ENCODE measurements at regions of chr13 and their contacts with region 1.

Region 1: GRCh38 chr13:77595166-77595810 is 59.8 kb downstream of the SCEL start:
- DNase-seq: no peak
- H3K4me3 ChIP-seq: no peak overlapping the region
- H3K27ac ChIP-seq: no peak overlapping the region
- H3K4me1 ChIP-seq: no peaks in the 10 kb centered on the region; a peak in 1 of 4 replicates
- H3K27me3 ChIP-seq: no peaks in the 10 kb centered on the region
- CTCF ChIP-seq: no peak
- EP300 ChIP-seq: no peak
- RAD21 ChIP-seq: no peak

Region 2: GRCh38 chr13:77574096-77574495 is 21.2 kb before region 1 on chr13:
- CTCF ChIA-PET with region 1: interaction called, 17 read pairs
- POLR2A ChIA-PET with region 1: no interaction called
- DNase-seq: no peak
- H3K4me3 ChIP-seq: no peak overlapping the region
- H3K27ac ChIP-seq: no peak overlapping the region
- H3K4me1 ChIP-seq: no peaks in the 10 kb centered on the region
- H3K27me3 ChIP-seq: no peaks in the 10 kb centered on the region
- CTCF ChIP-seq: no peak
- EP300 ChIP-seq: no peak
- RAD21 ChIP-seq: no peak

Region 3: GRCh38 chr13:77584106-77584505 is 11.2 kb before region 1 on chr13:
- CTCF ChIA-PET with region 1: interaction called, 12 read pairs
- POLR2A ChIA-PET with region 1: no interaction called
- DNase-seq: no peak
- H3K4me3 ChIP-seq: no peak overlapping the region
- H3K27ac ChIP-seq: no peak overlapping the region
- H3K4me1 ChIP-seq: no peaks in the 10 kb centered on the region; a peak in 1 of 4 replicates
- H3K27me3 ChIP-seq: no peaks in the 10 kb centered on the region
- CTCF ChIP-seq: no peak
- EP300 ChIP-seq: no peak
- RAD21 ChIP-seq: no peak

Region 4: DNA sequence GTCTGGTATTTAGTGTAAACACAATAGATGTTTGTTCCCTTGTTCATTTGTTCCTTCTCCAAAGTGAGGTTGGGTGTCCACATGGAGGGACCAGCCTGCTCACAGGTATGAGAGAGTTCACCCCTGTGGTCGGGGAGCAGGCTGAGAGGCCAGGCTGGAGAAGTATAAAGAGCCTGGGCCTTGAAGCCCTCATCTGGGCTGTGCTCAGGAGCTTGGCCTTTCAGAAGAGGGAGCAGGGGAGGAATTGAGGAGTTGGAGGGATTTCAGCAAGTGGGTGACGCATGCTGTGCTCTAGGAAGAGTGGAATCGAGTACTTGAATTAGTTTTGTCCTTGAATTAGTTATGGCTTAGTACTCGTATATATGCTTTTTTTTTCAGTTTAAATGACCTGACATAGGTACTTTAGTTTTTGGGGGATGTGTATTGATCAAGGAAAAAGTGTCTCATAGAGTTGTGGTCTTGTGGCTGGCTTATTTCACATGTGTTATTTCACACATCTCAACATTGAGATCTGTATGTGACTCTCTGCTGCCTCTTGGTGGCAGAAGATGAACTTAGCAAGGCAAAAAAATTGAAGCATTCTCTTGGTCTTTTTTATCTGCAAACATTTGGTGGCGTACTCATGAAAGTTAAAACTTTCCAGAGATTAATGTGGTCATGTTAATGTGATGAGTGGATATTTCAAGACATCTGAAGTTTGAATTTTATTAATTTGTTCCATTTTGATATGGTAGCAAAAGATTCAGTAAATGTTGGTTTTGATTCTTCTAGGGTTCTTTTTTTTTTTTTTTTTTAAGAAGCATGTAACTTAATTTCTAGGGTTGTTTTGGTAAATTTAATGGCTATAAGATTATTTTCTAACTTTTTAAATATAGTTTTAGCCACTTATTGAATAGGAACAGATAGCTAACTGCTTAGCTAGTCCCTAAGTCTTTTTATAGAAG is 156.5 kb after region 1 on chr13:
- CTCF ChIA-PET with region 1: interaction called, 80 read pairs
- POLR2A ChIA-PET with region 1: no interaction called
- DNase-seq: peak; percentile 23
- H3K4me3 ChIP-seq: no peak overlapping the region
- H3K27ac ChIP-seq: no peak overlapping the region
- H3K4me1 ChIP-seq: no peaks in the 10 kb centered on the region; a peak in 1 of 4 replicates
- H3K27me3 ChIP-seq: no peaks in the 10 kb centered on the region
- CTCF ChIP-seq: peak; percentile 80
- EP300 ChIP-seq: no peak
- RAD21 ChIP-seq: peak; percentile 88

Measured in SK-N-SH (cell line).